Naive thymus-derived CD4-positive, alpha-beta T cell (primary cell): ENCODE measurements at regions of chr10 and their contacts with region 1.

Region 1: DNA sequence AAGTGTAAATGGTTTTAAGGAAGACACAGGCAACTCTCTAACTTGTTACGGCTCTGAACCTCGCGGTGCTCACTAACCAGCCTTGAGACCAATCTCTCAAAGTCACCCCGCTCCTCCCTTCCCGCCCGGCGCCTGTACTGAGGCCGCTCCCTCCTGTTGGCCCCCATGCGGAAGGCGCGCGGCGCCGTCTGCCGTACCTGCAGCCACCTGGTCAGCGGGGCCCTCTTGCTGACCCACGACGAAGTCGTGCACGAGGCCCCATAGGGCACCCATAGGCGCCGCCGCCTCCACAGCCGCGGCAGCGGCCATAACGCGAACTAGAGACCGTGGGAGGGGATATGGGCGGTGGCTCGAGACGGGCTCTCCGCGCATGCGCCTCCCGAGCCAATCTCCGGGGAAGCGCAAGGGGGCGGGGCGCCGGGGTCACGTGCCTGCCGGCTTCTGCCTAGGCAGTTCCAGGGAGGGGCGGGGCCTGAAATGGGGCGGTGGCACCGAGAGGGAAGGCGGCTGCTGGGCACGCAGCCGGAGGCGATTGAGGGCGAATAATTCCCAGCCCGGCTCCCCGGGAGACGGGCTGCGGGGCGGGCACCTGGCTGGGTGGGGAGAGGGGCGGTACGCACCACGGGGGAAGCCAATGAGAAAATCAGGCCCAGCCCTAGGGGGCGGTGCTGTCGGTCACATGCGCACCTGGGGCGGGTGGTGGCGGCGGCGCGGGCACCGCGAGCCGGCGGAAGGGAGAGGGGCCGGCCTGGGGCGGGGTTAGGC is at the start of gene MMS19:
- DNase-seq: peak; percentile 99 to 100 (median 100)
- ATAC-seq: peak; percentile 89
- H3K4me3 ChIP-seq: peak within 1 kb of the TSS; percentile 96
- H3K4me3 Mint-ChIP-seq: peak within 1 kb of the TSS; percentile 85 to 99 (median 98)
- H3K27ac ChIP-seq: peak within 1 kb of the TSS; percentile 81
- H3K27ac Mint-ChIP-seq: peak within 1 kb of the TSS; percentile 94 to 98 (median 97)
- H3K4me1 ChIP-seq: peaks cover 20 to 41% of the 10 kb centered on the region in 2 donors
- H3K4me1 Mint-ChIP-seq: peaks cover 28 to 65% (median 49%) of the 10 kb centered on the region in 7 donors
- H3K27me3 ChIP-seq: no peaks in the 10 kb centered on the region
- H3K27me3 Mint-ChIP-seq: peaks cover 0 to 34% (median 21%) of the 10 kb centered on the region in 5 donors
- total RNA-seq, gene MMS19: 68.7 to 113 (median 87.9) TPM

Region 2: DNA sequence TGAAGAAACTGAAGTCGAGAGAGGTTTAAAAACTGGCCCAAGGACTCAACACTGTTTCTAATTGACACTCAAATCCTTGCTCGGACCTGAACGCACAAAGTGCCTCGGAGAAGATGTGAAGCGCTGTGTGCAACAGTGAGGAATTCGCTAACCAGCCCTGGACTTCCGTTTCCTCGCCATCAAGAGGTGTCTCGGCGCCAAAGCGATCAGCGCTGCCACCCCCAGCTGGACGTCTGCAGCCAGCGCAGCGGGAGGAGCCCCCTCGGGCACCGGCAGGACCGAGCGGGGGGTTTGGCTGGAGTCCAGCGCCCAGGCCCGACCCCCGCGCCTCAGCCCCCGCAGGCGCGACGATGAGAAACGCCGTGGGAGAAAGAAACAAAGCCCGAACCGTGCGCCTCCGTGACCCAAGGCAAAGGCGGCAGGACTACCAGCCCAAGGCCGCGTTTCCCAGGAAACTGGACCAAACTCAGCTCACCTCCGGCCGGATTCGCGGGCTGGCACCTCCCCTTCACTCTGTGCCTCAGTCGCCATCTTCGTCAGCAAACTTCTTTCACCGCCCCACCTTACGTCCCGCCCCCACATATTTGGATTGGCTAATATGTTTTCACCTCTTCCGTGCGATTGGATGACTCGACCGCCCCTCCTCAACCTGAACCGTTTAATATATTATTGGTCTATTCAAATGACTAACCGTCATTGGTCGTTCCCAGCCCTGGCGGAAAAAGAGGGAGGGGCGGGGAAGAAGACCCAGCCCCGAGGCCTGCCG is 206.0 kb before region 1 on chr10 and contains the start of gene ARHGAP19:
- CTCF ChIA-PET with region 1: no interaction called
- POLR2A ChIA-PET with region 1: no interaction called
- intact Hi-C with region 1: loop called (anchors 1 kb)
- DNase-seq: peak; percentile 65 to 97 (median 95)
- ATAC-seq: peak; percentile 100
- H3K4me3 ChIP-seq: peak within 1 kb of the TSS; percentile 88
- H3K4me3 Mint-ChIP-seq: peak within 1 kb of the TSS; percentile 83 to 97 (median 95)
- H3K27ac ChIP-seq: peak within 1 kb of the TSS; percentile 83
- H3K27ac Mint-ChIP-seq: peak within 1 kb of the TSS; percentile 32 to 98 (median 92)
- H3K4me1 ChIP-seq: peaks cover 4 to 8% of the 10 kb centered on the region in 2 donors
- H3K4me1 Mint-ChIP-seq: peaks cover 17 to 26% (median 24%) of the 10 kb centered on the region in 7 donors
- H3K27me3 ChIP-seq: no peaks in the 10 kb centered on the region
- H3K27me3 Mint-ChIP-seq: peaks cover 0 to 4% (median 0%) of the 10 kb centered on the region in 5 donors
- total RNA-seq, gene ARHGAP19: 12.8 to 40.1 (median 16.1) TPM

Region 3: DNA sequence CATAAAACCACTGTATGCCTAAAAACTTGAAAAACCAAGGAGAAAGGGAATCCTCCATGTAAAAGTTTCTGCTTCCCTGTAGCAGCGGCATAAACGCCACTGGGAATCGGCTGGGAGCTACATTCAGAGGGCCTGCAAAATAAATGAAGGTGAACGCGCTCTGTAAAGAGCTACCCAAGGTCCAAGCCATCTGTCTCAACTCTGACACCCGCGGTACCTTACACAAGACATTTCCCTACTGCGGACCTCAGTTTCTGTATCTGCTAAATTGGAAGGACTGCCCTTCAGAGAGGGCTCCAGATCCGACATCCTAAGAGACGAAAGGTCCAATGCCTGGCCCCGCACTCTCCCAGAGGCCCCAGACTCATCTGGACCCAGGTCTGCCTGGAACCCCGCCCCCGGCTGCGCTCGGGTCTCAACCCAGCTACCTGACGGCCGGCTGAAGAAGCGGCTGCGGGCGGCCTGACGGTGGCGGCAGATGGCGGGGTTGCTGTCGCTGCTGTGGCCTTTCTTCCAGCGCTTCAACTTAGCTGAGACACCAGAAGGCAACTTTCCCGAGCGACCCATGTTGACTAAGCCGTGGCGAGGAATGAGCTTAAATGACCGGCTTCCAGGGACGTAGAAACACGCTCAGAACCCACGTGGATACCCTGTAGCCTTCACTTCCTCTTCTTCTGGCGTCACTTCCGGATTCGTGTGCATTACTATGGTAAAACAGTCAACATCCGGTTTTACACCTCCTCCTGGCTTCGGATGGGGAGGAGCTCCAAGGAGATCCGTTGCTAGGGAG is 97.4 kb before region 1 on chr10 and contains the start of gene RRP12:
- CTCF ChIA-PET with region 1: no interaction called
- POLR2A ChIA-PET with region 1: no interaction called
- intact Hi-C with region 1: loop called (anchors 1 kb)
- DNase-seq: peak; percentile 47 to 96 (median 92)
- ATAC-seq: peak; percentile 96
- H3K4me3 ChIP-seq: peak within 1 kb of the TSS; percentile 73
- H3K4me3 Mint-ChIP-seq: peak within 1 kb of the TSS; percentile 90 to 97 (median 95)
- H3K27ac ChIP-seq: peak within 1 kb of the TSS; percentile 90
- H3K27ac Mint-ChIP-seq: peak within 1 kb of the TSS; percentile 81 to 99 (median 98)
- H3K4me1 ChIP-seq: peaks cover 13 to 15% of the 10 kb centered on the region in 2 donors
- H3K4me1 Mint-ChIP-seq: peaks cover 6 to 22% (median 17%) of the 10 kb centered on the region in 7 donors
- H3K27me3 ChIP-seq: no peaks in the 10 kb centered on the region
- H3K27me3 Mint-ChIP-seq: no peaks in the 10 kb centered on the region
- total RNA-seq, gene RRP12: 22.0 to 197 (median 32.3) TPM

Region 4: DNA sequence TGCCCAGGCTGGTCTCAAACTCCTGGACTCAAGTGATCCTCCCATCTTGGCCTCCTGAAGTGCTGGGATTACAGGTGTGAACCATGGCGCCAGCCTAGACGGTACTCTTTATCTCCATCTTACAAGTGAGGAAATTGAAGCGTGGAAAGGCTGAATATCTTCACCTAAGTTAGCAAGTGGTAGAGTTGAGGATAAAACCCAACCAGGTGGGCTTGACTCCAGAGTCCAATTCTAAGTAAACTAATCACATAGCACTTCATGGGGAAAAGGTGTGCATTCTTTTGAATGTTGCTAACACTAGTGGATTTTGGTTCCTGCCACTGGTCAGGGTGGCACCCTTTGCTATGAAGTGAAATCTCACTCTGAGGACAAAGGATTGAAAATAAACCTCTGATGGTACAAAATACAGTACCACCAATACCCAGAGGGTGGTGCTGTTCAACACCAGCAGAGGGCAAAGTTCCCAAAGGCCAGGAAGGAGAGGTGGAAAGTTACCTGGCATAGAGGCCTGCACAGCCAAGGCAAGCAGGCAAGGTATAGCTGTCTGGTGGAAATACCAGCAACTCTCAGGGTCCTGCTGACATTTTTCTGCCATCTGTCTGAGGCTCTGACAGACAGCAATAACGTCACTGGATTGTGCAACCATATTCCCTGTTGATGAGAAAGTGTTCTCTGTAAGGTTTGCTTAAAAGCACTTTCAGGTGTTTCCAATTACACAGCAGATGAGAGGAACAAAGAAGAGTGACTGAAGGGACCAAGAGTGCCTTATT is 34.7 kb before region 1 on chr10:
- CTCF ChIA-PET with region 1: interaction called, 4 read pairs
- POLR2A ChIA-PET with region 1: no interaction called
- intact Hi-C with region 1: loop called (anchors 1 to 5 kb)
- DNase-seq: peak in 7 of 9 donors; percentile 31 to 55 (median 46)
- ATAC-seq: peak; percentile 82
- H3K4me3 ChIP-seq: no peak overlapping the region
- H3K4me3 Mint-ChIP-seq: no peak overlapping the region
- H3K27ac ChIP-seq: no peak overlapping the region
- H3K27ac Mint-ChIP-seq: peak overlapping the region in 7 of 9 donors; percentile 24 to 76 (median 50)
- H3K4me1 ChIP-seq: no peaks in the 10 kb centered on the region
- H3K4me1 Mint-ChIP-seq: peaks cover 0 to 3% (median 0%) of the 10 kb centered on the region in 7 donors
- H3K27me3 ChIP-seq: no peaks in the 10 kb centered on the region
- H3K27me3 Mint-ChIP-seq: no peaks in the 10 kb centered on the region

Region 5: GRCh38 chr10:97632949-97633884 is 135.0 kb after region 1 on chr10 and contains the start of gene MORN4:
- CTCF ChIA-PET with region 1: no interaction called
- POLR2A ChIA-PET with region 1: no interaction called
- intact Hi-C with region 1: loop called (anchors 1 kb)
- DNase-seq: peak; percentile 82 to 94 (median 92)
- ATAC-seq: peak; percentile 100
- H3K4me3 ChIP-seq: peak within 1 kb of the TSS; percentile 91
- H3K4me3 Mint-ChIP-seq: peak within 1 kb of the TSS; percentile 92 to 100 (median 98)
- H3K27ac ChIP-seq: peak within 1 kb of the TSS; percentile 50
- H3K27ac Mint-ChIP-seq: peak within 1 kb of the TSS; percentile 82 to 96 (median 92)
- H3K4me1 ChIP-seq: peaks cover 0 to 10% of the 10 kb centered on the region in 2 donors
- H3K4me1 Mint-ChIP-seq: peaks cover 10 to 18% (median 16%) of the 10 kb centered on the region in 7 donors
- H3K27me3 ChIP-seq: no peaks in the 10 kb centered on the region
- H3K27me3 Mint-ChIP-seq: no peaks in the 10 kb centered on the region
- total RNA-seq, gene MORN4: 0.78 to 4.1 (median 1.5) TPM

Region 6: DNA sequence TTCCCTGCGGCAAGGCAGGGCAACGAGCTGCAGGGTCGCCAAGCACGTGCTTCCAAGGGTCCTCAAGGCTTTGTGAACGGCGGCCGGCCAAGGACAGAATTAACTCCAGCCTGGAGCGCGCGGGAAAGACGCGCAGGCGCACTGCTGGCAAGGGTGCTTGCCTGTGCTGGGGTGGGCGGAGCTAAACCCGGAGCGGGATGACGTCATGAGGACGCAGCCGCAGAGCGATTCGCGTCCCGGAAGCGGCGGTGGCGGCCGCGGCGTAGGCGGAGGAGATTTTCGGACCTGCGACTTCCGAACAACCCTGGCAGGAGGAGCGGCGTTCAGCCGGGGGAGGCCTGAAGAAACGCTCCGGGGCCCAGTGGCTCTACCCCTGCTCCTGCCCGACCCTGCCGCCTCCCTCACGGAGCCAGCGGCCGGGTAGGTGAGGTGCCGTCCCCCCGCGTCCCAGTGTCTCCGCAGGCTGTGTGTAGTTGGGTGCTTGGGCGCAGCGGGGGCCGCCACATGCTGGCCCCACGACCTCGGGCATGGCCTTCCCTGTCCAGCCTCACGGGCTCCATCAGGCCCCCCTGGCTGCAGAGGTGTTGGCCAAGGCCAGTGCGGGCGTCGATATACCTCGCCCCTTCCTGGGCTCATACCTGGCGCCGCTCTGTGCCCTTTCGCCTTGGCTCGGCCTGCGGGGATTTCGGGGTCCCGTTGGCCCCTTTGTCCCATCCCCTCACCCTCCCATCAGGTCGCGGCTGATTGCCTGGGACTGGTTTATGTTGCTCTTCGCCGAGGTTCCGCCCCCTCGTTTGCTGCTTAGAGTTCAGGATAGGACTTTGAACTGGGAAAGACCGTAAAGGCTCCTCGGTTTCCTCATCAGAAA is 238.9 kb after region 1 on chr10 and contains the start of gene ZFYVE27:
- CTCF ChIA-PET with region 1: no interaction called
- POLR2A ChIA-PET with region 1: no interaction called
- intact Hi-C with region 1: loop called (anchors 1 to 2 kb)
- DNase-seq: peak; percentile 88 to 99 (median 94)
- ATAC-seq: peak; percentile 96
- H3K4me3 ChIP-seq: peak within 1 kb of the TSS; percentile 86
- H3K4me3 Mint-ChIP-seq: peak within 1 kb of the TSS; percentile 88 to 98 (median 94)
- H3K27ac ChIP-seq: peak within 1 kb of the TSS; percentile 99
- H3K27ac Mint-ChIP-seq: peak within 1 kb of the TSS; percentile 95 to 99 (median 97)
- H3K4me1 ChIP-seq: peaks cover 18% of the 10 kb centered on the region in 2 donors
- H3K4me1 Mint-ChIP-seq: peaks cover 20 to 62% (median 58%) of the 10 kb centered on the region in 7 donors
- H3K27me3 ChIP-seq: no peaks in the 10 kb centered on the region
- H3K27me3 Mint-ChIP-seq: peaks cover 0 to 3% (median 0%) of the 10 kb centered on the region in 5 donors
- total RNA-seq, gene ZFYVE27: 31.0 to 68.8 (median 61.8) TPM